ENCODE measurements at regions of chr10 and their contacts with region 1.

Region 1: GRCh38 chr10:88932539-88933256 is 19.9 kb downstream of the ACTA2 start:
- DNase-seq: peak in 4 of 5 donors; percentile 50 to 62 (median 56)
- ATAC-seq: peak; percentile 72 to 85 (median 78)
- H3K4me3 ChIP-seq: no peak overlapping the region
- H3K27ac ChIP-seq: peak overlapping the region in 8 of 12 donors; percentile 22 to 78 (median 40)
- H3K4me1 ChIP-seq: peaks cover 0 to 52% (median 12%) of the 10 kb centered on the region in 12 donors
- H3K27me3 ChIP-seq: no peaks in the 10 kb centered on the region
- CTCF ChIP-seq: peak; percentile 76 to 93 (median 90)
- POLR2A ChIP-seq: no peak

Region 2: DNA sequence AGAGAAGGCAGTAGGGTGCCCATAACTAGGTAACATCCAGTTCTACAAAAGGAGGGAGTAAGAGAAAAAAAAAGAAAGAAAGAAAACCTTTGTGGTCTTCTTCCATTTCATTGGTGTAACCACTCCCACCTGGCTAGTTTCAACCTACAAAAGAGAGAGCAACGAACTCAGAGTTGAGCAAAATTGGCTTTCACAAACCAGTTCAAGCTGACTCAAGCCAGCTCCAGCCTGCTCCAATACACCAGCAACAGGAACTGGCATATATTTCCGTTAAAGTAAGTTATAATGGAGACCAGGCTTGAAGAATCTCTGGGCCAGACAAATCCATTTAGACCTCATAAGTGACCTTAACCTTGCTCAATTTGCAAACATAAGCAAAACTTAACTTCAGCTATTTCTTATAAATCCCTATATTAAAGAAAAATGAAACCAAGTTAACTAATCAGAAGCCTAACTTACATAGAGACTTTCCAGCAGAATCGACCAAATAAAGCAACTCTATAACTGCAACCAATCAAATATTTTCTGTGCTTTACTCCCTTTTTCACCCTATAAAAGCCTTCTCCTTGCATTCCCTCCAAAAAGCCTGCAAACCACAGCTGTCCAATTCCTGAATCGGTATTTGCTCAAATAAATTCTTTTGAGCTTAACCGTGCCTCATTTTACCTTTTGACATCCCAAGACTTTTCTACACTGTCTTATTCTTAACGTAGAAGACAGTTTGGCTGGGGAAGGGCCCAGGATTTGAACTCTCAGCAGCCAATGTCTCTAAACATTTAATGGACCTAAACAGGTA is 91.2 kb before region 1 on chr10:
- intact Hi-C with region 1: loop called in 5 of 10 experiments (anchors 1 to 2 kb)
- DNase-seq: no peak
- ATAC-seq: no peak
- H3K4me3 ChIP-seq: no peak overlapping the region
- H3K27ac ChIP-seq: peak overlapping the region in 1 of 12 donors; percentile 71
- H3K4me1 ChIP-seq: peaks cover 0 to 15% (median 0%) of the 10 kb centered on the region in 12 donors
- H3K27me3 ChIP-seq: no peaks in the 10 kb centered on the region
- CTCF ChIP-seq: no peak
- POLR2A ChIP-seq: no peak

Region 3: GRCh38 chr10:88986549-88987242 is 54.0 kb after region 1 on chr10:
- intact Hi-C with region 1: loop called (anchors 1 to 2 kb)
- DNase-seq: no peak
- ATAC-seq: no peak
- H3K4me3 ChIP-seq: no peak overlapping the region
- H3K27ac ChIP-seq: peak overlapping the region in 2 of 12 donors; percentile 43 to 95
- H3K4me1 ChIP-seq: peaks cover 0 to 67% (median 20%) of the 10 kb centered on the region in 12 donors
- H3K27me3 ChIP-seq: no peaks in the 10 kb centered on the region
- CTCF ChIP-seq: peak; percentile 74 to 93 (median 84)
- POLR2A ChIP-seq: no peak

Region 4: DNA sequence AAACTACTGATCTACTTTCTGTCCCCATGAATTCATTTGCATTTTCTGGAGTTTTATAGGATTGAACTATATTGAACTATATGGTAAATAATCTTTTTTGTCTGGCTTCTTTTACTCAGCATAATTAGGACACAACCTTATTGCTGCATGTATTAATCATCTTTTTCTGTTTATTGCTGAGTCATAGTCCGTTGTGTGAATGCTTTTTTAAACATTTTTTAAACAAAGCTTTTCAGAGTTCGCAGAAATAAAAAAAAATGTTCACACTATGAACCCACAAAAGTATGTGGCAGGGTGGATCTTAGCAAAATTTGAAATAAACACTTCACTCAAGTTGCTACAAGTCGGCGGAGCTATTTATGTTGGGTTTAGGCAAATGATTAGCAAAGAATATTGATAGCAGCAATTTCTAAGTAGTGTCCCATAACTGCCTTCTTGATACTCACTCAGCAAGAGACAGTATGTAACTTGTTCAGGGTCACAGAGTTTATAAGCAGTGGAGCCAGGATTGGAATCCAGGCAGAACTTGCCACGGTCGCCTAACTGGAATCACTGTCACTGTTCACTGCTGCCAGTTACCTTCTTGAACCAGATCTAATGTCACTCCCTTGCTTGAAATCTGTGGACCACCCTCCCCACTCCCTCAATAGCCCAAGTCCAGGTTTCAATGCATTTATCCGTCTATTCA is 268.8 kb after region 1 on chr10:
- intact Hi-C with region 1: loop called in 1 of 10 experiments (anchors 5 kb)
- DNase-seq: no peak
- ATAC-seq: no peak
- H3K4me3 ChIP-seq: no peak overlapping the region
- H3K27ac ChIP-seq: no peak overlapping the region
- H3K4me1 ChIP-seq: peaks cover 0 to 5% (median 2%) of the 10 kb centered on the region in 12 donors
- H3K27me3 ChIP-seq: peaks cover 0 to 14% (median 0%) of the 10 kb centered on the region in 9 donors
- CTCF ChIP-seq: no peak
- POLR2A ChIP-seq: no peak

Measured in heart left ventricle (tissue), 16 donors.